CD4-positive, alpha-beta memory T cell (primary cell): ENCODE measurements at regions of chr17 and their contacts with region 1.

Region 1: DNA sequence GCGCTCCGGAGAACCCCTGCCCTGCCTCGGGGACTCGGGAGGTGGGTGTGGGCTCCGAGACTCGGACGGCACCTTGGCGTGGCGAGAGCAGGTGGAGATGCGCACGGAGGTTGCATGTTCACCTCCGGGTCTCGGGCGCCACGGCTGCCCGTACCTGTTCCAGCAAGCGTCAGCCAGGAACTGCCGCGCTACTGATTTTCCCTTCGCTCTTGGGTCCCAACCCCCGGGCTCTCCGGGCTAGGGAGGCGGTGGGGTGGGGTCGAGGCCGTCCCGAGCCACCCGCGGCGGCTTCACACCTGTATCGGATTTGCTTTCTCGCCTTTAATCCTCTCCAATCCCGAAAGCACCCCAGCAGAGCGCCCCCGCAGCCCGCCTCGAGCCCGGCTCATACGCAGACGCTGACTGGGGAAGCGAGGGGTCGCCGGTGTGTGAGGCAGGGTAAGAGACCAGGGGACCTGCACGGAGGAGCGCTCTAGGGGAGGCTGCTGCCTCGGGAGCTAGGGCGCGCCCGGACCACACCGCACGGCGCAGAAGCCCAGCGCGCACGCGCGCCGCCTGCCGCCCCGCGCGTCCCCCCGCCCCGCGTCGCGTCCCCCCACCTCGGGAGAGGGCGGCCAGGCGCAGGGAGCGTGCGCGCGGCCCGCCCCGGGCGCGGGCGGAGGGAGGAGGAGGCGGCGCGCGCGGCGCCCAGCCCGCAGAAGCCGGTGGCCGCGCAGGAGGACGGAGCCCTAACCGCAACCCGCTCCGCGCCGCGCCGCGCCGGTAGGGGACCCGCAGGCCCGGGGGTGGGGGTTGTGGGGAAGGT is at the start of gene DUSP14:
- DNase-seq: peak; percentile 79 to 86 (median 84)
- H3K4me3 ChIP-seq: peak within 1 kb of the TSS; percentile 84 to 93
- H3K4me3 Mint-ChIP-seq: peak within 1 kb of the TSS; percentile 91 to 98 (median 95)
- H3K27ac ChIP-seq: peak within 1 kb of the TSS; percentile 56
- H3K27ac Mint-ChIP-seq: peak within 1 kb of the TSS; percentile 90 to 96 (median 93)
- H3K4me1 ChIP-seq: peaks cover 26% of the 10 kb centered on the region
- H3K4me1 Mint-ChIP-seq: peaks cover 20 to 31% (median 24%) of the 10 kb centered on the region in 4 donors
- H3K27me3 ChIP-seq: no peaks in the 10 kb centered on the region
- H3K27me3 Mint-ChIP-seq: no peaks in the 10 kb centered on the region
- total RNA-seq, gene DUSP14: 6.6 to 7.4 TPM

Region 2: DNA sequence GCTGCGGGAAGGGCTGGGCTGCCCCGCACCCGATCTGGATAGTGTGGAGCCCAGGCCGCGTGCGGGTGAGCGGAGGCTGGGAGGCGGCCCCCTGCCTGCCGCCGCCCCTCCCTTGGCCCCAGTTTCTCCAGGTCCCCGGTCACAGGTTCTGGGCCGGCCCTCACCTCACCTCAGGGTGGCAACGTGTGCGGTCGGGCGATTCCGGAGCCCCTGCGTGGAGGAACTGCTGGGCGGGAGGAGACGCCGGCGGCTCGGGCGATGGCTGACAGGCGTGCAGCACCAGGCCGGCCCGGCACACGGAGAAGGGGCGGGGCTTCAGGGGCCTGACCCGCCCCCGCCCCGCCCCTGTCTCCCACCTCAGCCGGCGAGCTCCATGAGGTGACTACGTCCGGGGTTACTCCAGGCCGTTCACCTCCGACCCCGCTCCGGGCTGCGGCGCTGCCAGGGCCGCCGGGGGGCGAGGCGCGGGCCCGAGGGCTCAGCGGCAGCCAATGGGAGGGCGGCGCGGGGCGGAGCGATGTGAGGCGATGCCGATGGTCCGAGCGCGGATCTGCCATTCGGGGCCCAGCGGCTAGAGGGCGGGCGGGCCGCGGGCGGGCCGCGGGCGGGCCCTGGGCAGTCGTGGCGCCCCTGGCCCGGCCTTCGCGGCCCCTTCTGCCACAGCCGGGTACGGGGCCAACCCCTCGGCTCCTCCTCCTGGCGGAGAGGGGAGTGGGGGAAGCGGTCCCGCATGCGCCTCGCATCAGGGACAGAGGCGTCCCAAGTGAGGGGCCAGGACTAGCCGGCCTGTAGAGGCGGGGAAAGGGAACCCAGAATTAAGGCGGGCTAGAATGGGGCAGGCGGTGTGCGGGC is 130.3 kb before region 1 on chr17:
- CTCF ChIA-PET with region 1: no interaction called
- POLR2A ChIA-PET with region 1: no interaction called
- intact Hi-C with region 1: loop called (anchors 2 kb)
- DNase-seq: peak; percentile 86 to 94 (median 89)
- H3K4me3 ChIP-seq: peak overlapping the region; percentile 84 to 94
- H3K4me3 Mint-ChIP-seq: peak overlapping the region; percentile 87 to 93 (median 92)
- H3K27ac ChIP-seq: peak overlapping the region; percentile 53
- H3K27ac Mint-ChIP-seq: peak overlapping the region in 6 of 7 donors; percentile 57 to 94 (median 93)
- H3K4me1 ChIP-seq: peaks cover 17% of the 10 kb centered on the region
- H3K4me1 Mint-ChIP-seq: peaks cover 13 to 22% (median 17%) of the 10 kb centered on the region in 4 donors
- H3K27me3 ChIP-seq: no peaks in the 10 kb centered on the region
- H3K27me3 Mint-ChIP-seq: no peaks in the 10 kb centered on the region

Region 3: GRCh38 chr17:37527249-37527851 is 38.0 kb after region 1 on chr17:
- CTCF ChIA-PET with region 1: no interaction called
- POLR2A ChIA-PET with region 1: no interaction called
- intact Hi-C with region 1: no loop called
- DNase-seq: peak; percentile 25 to 50 (median 38)
- H3K4me3 ChIP-seq: no peak overlapping the region
- H3K4me3 Mint-ChIP-seq: no peak overlapping the region
- H3K27ac ChIP-seq: no peak overlapping the region
- H3K27ac Mint-ChIP-seq: peak overlapping the region in 6 of 7 donors; percentile 14 to 81 (median 65)
- H3K4me1 ChIP-seq: no peaks in the 10 kb centered on the region
- H3K4me1 Mint-ChIP-seq: peaks cover 0 to 9% (median 5%) of the 10 kb centered on the region in 4 donors
- H3K27me3 ChIP-seq: no peaks in the 10 kb centered on the region
- H3K27me3 Mint-ChIP-seq: no peaks in the 10 kb centered on the region